HEK293 (cell line): ENCODE measurements at regions of chr11 and their contacts with region 1.

Region 1: DNA sequence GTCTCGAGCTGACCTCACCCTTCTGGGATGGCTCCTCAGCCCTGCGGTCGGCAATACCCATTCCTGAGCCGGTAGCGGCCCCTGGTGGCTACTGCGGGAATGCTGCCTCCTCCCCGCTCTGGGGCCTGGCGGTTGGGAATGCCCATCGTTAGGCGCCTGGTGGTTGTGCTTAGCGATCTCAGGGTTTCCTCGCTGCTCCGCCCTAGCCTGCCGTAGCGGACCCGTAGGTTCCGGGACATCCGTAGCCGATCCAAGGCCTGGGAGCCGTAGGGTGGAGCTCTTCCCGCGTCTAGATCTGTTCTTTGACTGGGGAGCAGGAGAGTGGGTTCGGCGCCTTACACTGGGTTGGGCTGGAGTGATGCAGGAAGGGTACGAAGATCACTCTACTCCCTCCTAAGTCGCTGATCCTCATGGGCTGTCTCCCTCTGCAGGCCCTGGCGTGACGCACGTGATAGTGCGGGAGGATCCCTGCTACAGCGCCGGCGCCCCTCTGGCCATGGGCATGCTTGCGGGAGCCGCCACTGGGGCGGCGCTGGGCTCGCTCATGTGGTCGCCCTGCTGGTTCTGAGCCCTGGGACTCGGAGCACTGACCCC is 14.8 kb downstream of the PLEKHB1 start:
- H3K4me3 ChIP-seq: no peak overlapping the region; the same call in 1 of the 2 replicates
- H3K27ac ChIP-seq: no peak overlapping the region
- H3K4me1 ChIP-seq: no peaks in the 10 kb centered on the region
- CTCF ChIP-seq: peak; percentile 91

Region 2: GRCh38 chr11:73307323-73308002 is 353.7 kb before region 1 on chr11:
- CTCF ChIA-PET with region 1: interaction called, 14 read pairs
- POLR2A ChIA-PET with region 1: interaction called, 9 read pairs
- H3K4me3 ChIP-seq: peak overlapping the region; percentile 57
- H3K27ac ChIP-seq: peak overlapping the region; percentile 80
- H3K4me1 ChIP-seq: 0 out of 2 replicates have a peak, but pooled peaks cover 3% of the 10 kb centered on the region
- CTCF ChIP-seq: peak; percentile 83

Region 3: GRCh38 chr11:73393479-73394380 is 267.4 kb before region 1 on chr11:
- CTCF ChIA-PET with region 1: interaction called, 122 read pairs
- POLR2A ChIA-PET with region 1: no interaction called
- H3K4me3 ChIP-seq: no peak overlapping the region
- H3K27ac ChIP-seq: no peak overlapping the region
- H3K4me1 ChIP-seq: no peaks in the 10 kb centered on the region
- CTCF ChIP-seq: peak; percentile 52; the same call in 1 of the 2 replicates

Region 4: DNA sequence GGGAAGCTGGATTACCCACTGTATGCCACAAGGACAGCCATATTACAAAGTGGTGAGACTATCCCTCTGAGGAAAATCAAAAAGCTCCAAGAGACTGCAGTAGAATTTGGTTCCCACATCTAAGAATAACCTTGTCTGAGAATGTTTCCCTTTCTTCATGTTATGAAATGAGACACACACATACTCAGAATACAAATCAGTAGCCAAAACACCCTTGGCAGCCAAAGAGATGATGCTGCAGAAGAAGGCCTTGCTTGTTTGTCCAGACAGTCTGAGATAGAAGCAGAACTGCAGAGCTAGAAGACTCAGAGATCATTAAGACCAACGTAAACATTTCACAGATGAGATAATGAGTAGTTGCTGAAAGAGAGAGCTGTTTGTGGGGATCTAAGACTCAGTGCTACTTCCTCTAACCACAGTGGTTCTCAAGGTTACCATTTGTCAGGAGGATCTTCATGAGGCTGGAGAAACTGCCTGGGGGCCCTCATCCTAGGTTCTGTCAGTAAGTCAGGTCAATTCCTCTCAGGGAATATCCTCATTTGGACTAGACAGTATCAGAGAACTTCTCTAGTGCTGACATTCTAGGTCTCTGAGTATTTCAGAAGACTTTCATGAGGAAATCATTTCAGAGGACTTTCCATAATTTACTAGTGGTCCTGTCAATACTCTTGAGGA is 246.0 kb before region 1 on chr11:
- CTCF ChIA-PET with region 1: interaction called, 16 read pairs
- POLR2A ChIA-PET with region 1: no interaction called
- H3K4me3 ChIP-seq: no peak overlapping the region
- H3K27ac ChIP-seq: no peak overlapping the region
- H3K4me1 ChIP-seq: no peaks in the 10 kb centered on the region
- CTCF ChIP-seq: no peak

Region 5: DNA sequence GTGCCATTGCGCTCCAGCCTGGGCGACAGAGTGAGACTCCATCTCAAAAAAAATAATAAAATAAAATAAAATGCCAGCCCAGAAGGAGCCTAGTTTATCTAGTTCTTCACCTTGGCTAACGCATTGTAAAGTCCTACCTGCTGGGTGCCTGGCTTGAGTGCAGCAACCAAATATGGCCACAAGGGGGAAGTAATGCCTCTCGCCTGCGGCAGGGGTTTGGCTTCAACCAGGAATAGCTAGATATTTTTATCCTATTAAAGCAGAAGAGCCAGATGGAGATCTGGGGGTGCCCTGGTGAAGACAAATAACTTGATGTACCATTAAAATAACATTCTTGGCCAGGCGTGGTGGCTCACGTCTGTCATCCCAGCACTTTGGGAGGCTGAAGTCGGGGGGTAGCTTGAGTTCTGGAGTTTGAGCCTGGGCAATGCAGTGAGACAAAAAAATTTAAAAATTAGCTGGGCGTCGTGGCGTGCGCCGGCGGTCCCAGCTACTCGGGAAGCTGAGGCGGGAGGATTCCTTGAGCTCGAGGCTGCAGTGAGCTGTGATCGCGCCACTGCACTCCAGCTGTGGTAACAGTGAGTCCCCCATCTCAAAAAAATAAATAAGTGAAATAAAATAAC is 35.3 kb before region 1 on chr11:
- CTCF ChIA-PET with region 1: interaction called, 160 read pairs
- POLR2A ChIA-PET with region 1: interaction called, 7 read pairs
- H3K4me3 ChIP-seq: no peak overlapping the region
- H3K27ac ChIP-seq: no peak overlapping the region
- H3K4me1 ChIP-seq: no peaks in the 10 kb centered on the region
- CTCF ChIP-seq: peak; percentile 54; the same call in 1 of the 2 replicates

Region 6: GRCh38 chr11:73647459-73648100 is 13.6 kb before region 1 on chr11:
- CTCF ChIA-PET with region 1: interaction called, 12 read pairs
- POLR2A ChIA-PET with region 1: no interaction called
- H3K4me3 ChIP-seq: peak overlapping the region; percentile 27
- H3K27ac ChIP-seq: no peak overlapping the region
- H3K4me1 ChIP-seq: no peaks in the 10 kb centered on the region
- CTCF ChIP-seq: no peak

Region 7: DNA sequence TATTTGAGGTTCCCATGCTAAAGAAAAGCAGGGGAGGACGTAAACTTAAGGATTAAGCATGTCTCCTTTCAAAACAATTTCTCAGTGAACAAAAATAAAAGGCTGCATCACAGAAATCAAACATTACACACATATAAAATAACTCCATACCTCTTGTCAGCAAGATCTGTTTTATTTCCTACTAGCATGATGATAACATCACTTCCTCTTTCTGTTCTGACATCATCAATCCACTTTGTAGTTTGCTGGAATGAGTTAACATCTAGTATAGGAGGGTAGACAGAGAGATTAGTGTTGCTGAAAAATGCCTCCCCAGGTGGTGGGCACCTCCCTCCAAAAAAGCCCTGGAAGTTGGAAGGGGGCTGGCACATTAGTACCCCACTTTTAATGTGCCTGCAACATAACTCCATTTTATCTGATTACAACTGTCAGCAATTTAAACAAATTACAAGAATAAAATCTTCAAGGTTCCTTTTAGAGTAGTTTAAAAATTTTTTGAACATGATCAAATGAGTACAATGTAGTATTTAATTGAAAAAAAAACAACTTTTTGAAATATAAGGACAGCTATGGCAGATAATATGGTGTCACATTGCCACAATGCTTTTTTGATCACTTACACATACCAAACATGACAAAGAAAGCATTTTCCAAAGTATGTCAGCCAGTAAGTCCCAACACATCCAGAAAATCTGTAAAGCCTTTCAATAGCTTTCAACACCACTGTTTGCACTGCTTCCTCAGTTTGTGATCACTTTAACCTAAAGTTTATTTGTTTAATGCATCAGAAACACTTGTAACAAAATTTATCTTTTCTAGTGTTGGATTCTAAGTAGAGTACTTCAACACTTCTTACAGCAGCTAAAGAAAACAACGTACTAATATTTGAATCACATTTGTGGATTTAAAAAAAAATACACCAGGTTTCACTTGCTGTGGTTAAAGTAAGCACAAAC is 55.2 kb after region 1 on chr11:
- CTCF ChIA-PET with region 1: no interaction called
- POLR2A ChIA-PET with region 1: no interaction called
- H3K4me3 ChIP-seq: no peak overlapping the region
- H3K27ac ChIP-seq: no peak overlapping the region
- H3K4me1 ChIP-seq: peaks cover 5% of the 10 kb centered on the region
- CTCF ChIP-seq: no peak